B cell (primary cell): ENCODE measurements at regions of chr21 and their contacts with region 1.

Region 1: GRCh38 chr21:44817506-44817880 is 369 bp downstream of the SUMO3 start:
- DNase-seq: peak; percentile 91
- ATAC-seq: peak; percentile 95
- H3K4me3 ChIP-seq: peak overlapping the region in 4 of 5 experiments; percentile 47 to 80 (median 76)
- H3K4me3 Mint-ChIP-seq: peak overlapping the region; percentile 63
- H3K27ac ChIP-seq: no peak overlapping the region
- H3K27ac Mint-ChIP-seq: peak overlapping the region; percentile 50
- H3K4me1 ChIP-seq: peaks cover 5 to 16% of the 10 kb centered on the region in 2 donors
- H3K4me1 Mint-ChIP-seq: peaks cover 10% of the 10 kb centered on the region
- H3K27me3 ChIP-seq: no peaks in the 10 kb centered on the region
- H3K27me3 Mint-ChIP-seq: no peaks in the 10 kb centered on the region
- CTCF ChIP-seq: no peak

Region 2: DNA sequence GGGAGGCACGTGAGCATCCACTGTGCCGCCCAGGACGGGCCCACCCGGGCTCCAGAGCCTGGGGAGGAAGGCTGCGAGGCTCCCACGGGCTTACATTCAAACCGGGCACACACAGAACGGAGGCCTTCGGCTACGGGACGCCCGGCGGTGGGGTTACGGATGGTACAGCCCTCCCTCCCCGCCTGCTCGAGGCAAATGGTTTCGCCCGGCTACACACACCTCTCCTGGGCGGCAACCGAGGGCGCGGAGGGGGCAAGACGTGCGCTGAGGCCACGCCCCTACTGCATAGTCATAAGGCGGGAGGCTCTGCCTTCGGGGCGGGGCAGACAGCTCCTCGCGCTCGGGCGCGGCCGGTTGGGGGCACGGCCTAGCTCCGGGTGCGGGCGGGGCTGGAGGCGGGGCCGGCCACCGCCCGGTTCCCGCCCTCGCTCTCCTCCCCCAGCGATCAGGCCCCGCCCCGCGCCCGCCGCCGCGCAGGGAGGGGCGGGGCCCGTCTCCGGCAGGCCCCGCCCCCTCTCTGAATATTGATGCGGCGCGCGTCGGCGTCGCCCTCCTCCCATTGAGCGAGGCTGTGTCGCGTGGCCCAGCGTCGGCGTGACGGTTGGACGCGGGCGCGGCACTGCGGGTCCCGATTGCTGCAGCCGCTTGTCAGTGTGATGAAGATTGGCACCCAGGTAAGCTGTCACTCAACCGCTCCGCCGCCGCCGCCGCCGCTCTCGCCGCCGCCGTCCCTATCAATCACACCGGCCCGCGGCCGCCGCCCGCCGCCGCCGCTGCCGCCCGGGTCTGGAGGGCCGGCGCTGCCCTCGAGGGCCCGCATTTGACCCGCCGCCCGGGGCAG is 1843.3 kb before region 1 on chr21 and contains the start of gene PKNOX1:
- CTCF ChIA-PET with region 1: no interaction called
- POLR2A ChIA-PET with region 1: no interaction called
- intact Hi-C with region 1: loop called (anchors 10 kb)
- DNase-seq: peak; percentile 100
- ATAC-seq: peak; percentile 84
- H3K4me3 ChIP-seq: peak within 1 kb of the TSS; percentile 39 to 84 (median 69)
- H3K4me3 Mint-ChIP-seq: peak within 1 kb of the TSS; percentile 92
- H3K27ac ChIP-seq: peak within 1 kb of the TSS; percentile 76 to 87
- H3K27ac Mint-ChIP-seq: peak within 1 kb of the TSS; percentile 98
- H3K4me1 ChIP-seq: peaks cover 14 to 18% of the 10 kb centered on the region in 2 donors
- H3K4me1 Mint-ChIP-seq: peaks cover 19% of the 10 kb centered on the region
- H3K27me3 ChIP-seq: no peaks in the 10 kb centered on the region
- H3K27me3 Mint-ChIP-seq: no peaks in the 10 kb centered on the region
- CTCF ChIP-seq: no peak
- total RNA-seq, gene PKNOX1: 25.3 and 29.5 TPM in 2 replicates

Region 3: DNA sequence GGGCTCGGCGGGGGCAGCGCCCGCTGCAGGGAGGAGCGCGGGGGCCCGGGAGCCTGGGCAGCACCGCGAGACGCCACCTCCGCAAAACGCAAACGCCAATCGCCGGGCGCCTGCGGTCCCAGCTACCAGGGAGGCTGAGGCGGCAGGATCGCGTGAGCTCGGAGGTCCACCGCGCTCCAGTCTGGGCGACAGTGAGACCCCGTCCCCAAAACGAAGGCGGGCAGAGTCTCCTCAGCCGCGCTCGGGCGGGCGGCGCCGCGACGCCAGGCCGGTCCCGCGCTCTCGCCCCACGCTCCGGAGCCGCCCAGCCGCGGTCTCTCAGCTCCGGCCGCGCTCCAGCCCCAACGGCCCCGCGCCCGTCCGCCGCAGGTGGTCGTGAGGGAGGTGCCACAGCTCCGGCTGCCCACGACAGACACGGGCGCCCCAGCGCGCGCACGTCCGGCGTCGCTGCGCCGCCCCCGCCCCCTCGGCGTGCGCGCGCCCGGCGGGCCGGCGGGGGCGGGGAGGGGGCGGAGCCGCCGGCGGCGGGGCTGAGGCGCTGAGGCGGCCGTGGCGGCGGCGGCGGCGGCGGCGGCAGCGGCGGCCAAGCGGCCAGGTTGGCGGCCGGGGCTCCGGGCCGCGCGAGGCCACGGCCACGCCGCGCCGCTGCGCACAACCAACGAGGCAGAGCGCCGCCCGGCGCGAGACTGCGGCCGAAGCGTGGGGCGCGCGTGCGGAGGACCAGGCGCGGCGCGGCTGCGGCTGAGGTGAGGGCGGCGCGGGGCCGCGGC is 256.7 kb after region 1 on chr21 and contains the start of gene ADARB1:
- CTCF ChIA-PET with region 1: no interaction called
- POLR2A ChIA-PET with region 1: interaction called, 3 read pairs
- intact Hi-C with region 1: loop called (anchors 10 kb)
- DNase-seq: peak; percentile 84
- ATAC-seq: peak; percentile 87
- H3K4me3 ChIP-seq: peak within 1 kb of the TSS; percentile 69 to 86 (median 75)
- H3K4me3 Mint-ChIP-seq: peak within 1 kb of the TSS; percentile 90
- H3K27ac ChIP-seq: peak within 1 kb of the TSS in 1 of 2 donors; percentile 51
- H3K27ac Mint-ChIP-seq: peak within 1 kb of the TSS; percentile 84
- H3K4me1 ChIP-seq: peaks cover 37 to 44% of the 10 kb centered on the region in 2 donors
- H3K4me1 Mint-ChIP-seq: peaks cover 38% of the 10 kb centered on the region
- H3K27me3 ChIP-seq: no peaks in the 10 kb centered on the region
- H3K27me3 Mint-ChIP-seq: no peaks in the 10 kb centered on the region
- CTCF ChIP-seq: no peak
- total RNA-seq, gene ADARB1: 17.1 and 23.2 TPM in 2 replicates